ENCODE measurements at regions of chr4 and their contacts with region 1.

Region 1: DNA sequence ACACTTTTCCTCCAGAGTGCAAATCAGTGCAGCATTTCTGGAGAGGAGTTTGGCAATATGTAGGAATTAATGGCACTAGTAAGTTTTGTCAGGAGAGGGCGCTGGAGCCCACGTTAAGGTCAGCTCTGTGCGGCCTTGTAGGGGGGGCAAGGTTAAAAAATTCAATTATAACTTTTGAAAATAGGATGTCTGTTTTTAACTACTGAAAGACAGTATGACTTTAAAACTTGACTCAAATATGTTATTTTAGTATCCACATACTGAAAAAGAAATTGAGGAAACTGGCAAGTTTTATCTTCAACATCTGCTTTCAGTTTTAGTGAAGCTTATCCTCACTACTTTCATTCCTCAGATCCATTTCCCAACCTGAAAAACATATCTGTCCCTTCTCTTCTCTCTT is 30.9 kb upstream of the HSD17B13 start:
- DNase-seq: peak; percentile 41
- CTCF ChIP-seq: peak; percentile 71

Region 2: GRCh38 chr4:87848622-87849351 is 495.2 kb after region 1 on chr4:
- in situ Hi-C with region 1: loop called (anchors 25 kb)
- DNase-seq: peak; percentile 43
- CTCF ChIP-seq: peak; percentile 66